Prostate gland (tissue), 2 donors: ENCODE measurements at regions of chr1 and their contacts with region 1.

Region 1: GRCh38 chr1:218345673-218346390 is 696 bp downstream of the TGFB2 start:
- DNase-seq: peak; percentile 55
- H3K4me3 ChIP-seq: peak overlapping the region; percentile 50 to 61
- H3K27ac ChIP-seq: peak overlapping the region; percentile 85 to 86
- H3K4me1 ChIP-seq: no peaks in the 10 kb centered on the region
- H3K27me3 ChIP-seq: no peaks in the 10 kb centered on the region
- CTCF ChIP-seq: no peak
- POLR2A ChIP-seq: peak; percentile 9

Region 2: DNA sequence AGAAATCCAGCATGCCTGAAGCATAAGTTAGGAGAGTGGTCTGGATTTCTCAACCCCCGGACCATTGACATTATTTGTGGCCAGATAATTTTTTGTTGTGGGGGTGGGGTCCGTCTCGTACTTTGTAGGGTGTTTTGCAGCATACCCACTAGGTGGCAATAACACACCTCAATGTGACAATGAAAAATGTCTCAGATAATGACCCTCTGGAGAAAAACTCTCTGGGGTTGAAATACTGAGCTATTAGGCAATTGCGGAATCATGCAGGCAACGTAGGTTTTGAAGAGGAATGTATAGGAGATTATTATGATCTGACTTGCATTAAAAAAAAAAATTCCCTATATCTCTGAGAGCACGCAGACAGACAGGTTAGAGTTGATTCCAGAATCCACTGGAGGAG is 86.0 kb before region 1 on chr1:
- intact Hi-C with region 1: no loop called
- DNase-seq: no peak
- H3K4me3 ChIP-seq: no peak overlapping the region
- H3K27ac ChIP-seq: no peak overlapping the region
- H3K4me1 ChIP-seq: no peaks in the 10 kb centered on the region
- H3K27me3 ChIP-seq: no peaks in the 10 kb centered on the region
- CTCF ChIP-seq: no peak
- POLR2A ChIP-seq: no peak

Region 3: GRCh38 chr1:218476380-218476779 is 130.5 kb after region 1 on chr1:
- intact Hi-C with region 1: loop called (anchors 5 kb)
- DNase-seq: no peak
- H3K4me3 ChIP-seq: no peak overlapping the region
- H3K27ac ChIP-seq: peak overlapping the region; percentile 10 to 16
- H3K4me1 ChIP-seq: peaks cover 4% of the 10 kb centered on the region
- H3K27me3 ChIP-seq: no peaks in the 10 kb centered on the region
- CTCF ChIP-seq: no peak
- POLR2A ChIP-seq: no peak

Region 4: DNA sequence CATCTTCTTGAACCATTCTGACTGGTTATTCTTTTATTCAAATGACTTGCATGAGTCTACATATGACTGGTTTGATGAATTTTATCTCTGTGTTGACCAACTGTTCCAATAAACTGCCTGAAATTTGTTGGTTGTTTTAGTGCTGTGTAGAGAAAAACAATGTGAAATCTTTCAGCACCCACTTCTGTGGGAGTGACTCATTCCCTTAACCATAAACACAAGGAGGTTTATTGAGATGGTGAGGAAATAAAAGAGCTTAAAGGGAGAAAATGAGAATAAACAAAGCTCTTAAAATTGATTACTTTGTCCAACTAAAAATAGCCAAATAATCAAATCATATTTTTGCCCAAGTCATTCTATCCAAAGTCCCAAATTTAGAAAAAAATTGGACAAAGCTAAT is 340.4 kb after region 1 on chr1:
- intact Hi-C with region 1: loop called (anchors 10 kb)
- DNase-seq: no peak
- H3K4me3 ChIP-seq: no peak overlapping the region
- H3K27ac ChIP-seq: no peak overlapping the region
- H3K4me1 ChIP-seq: no peaks in the 10 kb centered on the region
- H3K27me3 ChIP-seq: no peaks in the 10 kb centered on the region
- CTCF ChIP-seq: no peak
- POLR2A ChIP-seq: no peak

Region 5: GRCh38 chr1:218829099-218829498 is 483.3 kb after region 1 on chr1:
- intact Hi-C with region 1: loop called (anchors 5 kb)
- DNase-seq: no peak
- H3K4me3 ChIP-seq: no peak overlapping the region
- H3K27ac ChIP-seq: no peak overlapping the region
- H3K4me1 ChIP-seq: no peaks in the 10 kb centered on the region
- H3K27me3 ChIP-seq: no peaks in the 10 kb centered on the region
- CTCF ChIP-seq: no peak
- POLR2A ChIP-seq: no peak

Region 6: GRCh38 chr1:219173758-219174588 is 828.1 kb after region 1 on chr1 and contains the start of gene LYPLAL1:
- intact Hi-C with region 1: loop called (anchors 5 kb)
- DNase-seq: peak; percentile 81
- H3K4me3 ChIP-seq: peak within 1 kb of the TSS; percentile 35 to 69
- H3K27ac ChIP-seq: peak within 1 kb of the TSS; percentile 69 to 94
- H3K4me1 ChIP-seq: peaks cover 10% of the 10 kb centered on the region
- H3K27me3 ChIP-seq: no peaks in the 10 kb centered on the region
- CTCF ChIP-seq: no peak
- POLR2A ChIP-seq: peak; percentile 84
- total RNA-seq, gene LYPLAL1: 15.8 to 29.3 TPM

Region 7: GRCh38 chr1:219271818-219272535 is 926.1 kb after region 1 on chr1:
- intact Hi-C with region 1: loop called (anchors 10 kb)
- DNase-seq: no peak
- H3K4me3 ChIP-seq: no peak overlapping the region
- H3K27ac ChIP-seq: peak overlapping the region in 1 of 2 donors; percentile 29
- H3K4me1 ChIP-seq: no peaks in the 10 kb centered on the region
- H3K27me3 ChIP-seq: no peaks in the 10 kb centered on the region
- CTCF ChIP-seq: no peak
- POLR2A ChIP-seq: no peak

Region 8: DNA sequence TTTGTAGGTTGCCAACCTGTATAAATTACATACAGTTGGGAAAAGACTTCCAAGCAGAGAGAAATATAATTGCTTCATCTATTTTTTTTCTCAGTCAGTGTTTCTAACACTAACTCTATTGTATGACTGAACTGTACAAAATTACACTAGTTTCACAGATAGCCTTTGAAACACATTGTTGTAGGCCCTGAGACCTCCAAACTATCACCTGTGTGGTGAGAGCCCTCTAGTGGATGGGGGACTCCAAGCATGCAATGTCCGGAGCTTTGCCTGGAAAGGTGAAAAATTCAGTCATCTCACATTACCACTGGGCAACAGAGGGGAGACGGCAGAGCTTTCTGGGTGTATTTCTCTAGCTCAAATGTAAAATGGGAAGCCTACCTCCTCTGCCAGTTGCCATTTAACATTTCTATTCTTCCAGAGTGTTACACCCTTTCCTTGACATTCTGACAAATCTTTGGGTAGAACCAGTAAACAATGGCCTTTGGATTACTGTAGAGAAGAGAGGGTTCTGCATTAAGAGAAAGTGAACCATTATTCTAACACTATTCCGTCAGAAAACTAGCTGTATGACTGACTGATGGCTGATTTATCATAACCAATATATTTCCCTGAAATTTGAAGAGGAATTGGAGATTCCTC is 1040.1 kb after region 1 on chr1:
- intact Hi-C with region 1: loop called (anchors 10 kb)
- DNase-seq: peak; percentile 47
- H3K4me3 ChIP-seq: no peak overlapping the region
- H3K27ac ChIP-seq: no peak overlapping the region
- H3K4me1 ChIP-seq: no peaks in the 10 kb centered on the region
- H3K27me3 ChIP-seq: no peaks in the 10 kb centered on the region
- CTCF ChIP-seq: peak; percentile 20 to 66 (median 60)
- POLR2A ChIP-seq: no peak